ENCODE measurements at regions of chr19 and their contacts with region 1.

Region 1: GRCh38 chr19:41499899-41500298 is 56.9 kb downstream of the ERICH4 start:
- DNase-seq: no peak
- H3K4me3 ChIP-seq: no peak overlapping the region
- CTCF ChIP-seq: no peak

Region 2: DNA sequence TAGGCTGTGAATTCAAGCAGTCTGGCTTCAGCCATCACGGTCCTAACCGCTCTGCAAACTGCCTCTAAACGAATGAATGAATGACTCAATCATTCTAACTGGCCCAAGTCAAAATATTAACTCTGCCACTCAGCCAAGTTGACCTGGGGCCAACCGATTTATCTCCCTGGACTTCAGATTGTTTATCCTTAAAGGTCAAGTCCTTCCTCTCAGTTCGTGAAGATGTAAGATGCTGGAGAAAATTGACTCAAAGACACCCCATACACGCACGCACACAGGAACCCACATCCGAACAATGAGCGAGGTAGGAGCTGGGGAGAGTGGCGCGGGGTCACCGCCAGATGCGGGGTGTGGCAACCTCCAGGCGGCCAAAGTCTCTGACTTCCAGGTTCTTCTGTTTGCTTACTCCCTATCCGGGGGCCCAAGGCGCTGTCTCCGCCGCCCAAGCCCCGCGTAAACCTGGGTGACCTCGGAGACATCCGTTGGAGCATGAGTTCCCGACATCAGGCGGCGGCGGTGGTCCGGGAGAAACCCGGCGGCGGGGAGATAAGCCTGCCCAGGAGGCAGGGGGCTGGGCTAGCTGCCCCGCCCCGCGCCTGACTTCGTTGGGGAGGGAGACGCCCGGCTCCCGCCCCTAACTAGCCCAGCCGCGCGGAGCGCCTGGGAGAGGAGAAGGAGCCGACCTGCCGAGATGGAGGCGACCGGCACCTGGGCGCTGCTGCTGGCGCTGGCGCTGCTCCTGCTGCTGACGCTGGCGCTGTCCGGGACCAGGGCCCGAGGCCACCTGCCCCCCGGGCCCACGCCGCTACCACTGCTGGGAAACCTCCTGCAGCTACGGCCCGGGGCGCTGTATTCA is 307.1 kb before region 1 on chr19 and contains the start of gene CYP2S1:
- in situ Hi-C with region 1: no loop called
- DNase-seq: no peak
- H3K4me3 ChIP-seq: peak within 1 kb of the TSS; percentile 14
- CTCF ChIP-seq: no peak

Region 3: DNA sequence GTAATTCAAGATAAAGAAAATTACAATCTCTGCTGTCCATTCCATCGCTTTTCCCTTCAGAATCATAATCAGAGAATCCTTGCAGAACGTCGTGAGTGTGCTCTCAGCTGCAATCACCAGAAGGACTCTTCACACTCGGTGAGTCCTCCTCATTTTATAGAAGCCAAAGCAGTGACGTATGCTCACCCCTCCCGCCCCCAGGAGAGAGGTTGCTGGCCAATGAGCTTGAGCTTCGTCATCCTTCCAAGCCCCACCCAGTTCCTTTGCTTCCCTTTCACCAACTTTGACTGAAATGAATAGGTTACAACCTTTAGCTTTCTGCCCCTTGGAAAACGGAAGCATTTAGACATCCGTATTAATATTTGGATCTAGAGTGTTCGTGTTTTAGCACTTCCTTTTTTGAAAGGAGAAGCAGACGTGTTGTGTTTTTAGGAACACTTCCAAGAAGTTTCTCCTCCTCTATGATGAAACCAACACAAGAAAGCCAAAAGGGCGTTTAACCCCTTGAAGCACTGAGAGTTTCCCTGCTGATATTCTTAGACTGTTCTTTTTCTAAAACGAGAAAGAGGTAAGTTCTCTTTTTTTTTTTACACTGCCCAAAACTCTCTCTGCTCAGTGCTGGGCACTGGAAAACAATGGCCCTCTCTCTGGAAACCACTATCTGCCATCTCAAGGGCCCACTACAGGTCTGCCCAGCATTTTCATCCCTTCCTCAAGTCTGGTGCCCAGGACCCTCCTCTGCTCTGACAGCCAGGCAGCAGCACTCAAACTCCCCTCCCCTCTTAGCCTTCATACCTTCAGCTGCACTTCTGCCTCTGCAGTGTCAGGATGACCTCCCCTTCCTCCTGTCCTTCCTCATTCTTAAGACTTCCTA is 31.8 kb after region 1 on chr19:
- in situ Hi-C with region 1: loop called (anchors 5 kb)
- DNase-seq: no peak
- H3K4me3 ChIP-seq: no peak overlapping the region
- CTCF ChIP-seq: no peak

Region 4: DNA sequence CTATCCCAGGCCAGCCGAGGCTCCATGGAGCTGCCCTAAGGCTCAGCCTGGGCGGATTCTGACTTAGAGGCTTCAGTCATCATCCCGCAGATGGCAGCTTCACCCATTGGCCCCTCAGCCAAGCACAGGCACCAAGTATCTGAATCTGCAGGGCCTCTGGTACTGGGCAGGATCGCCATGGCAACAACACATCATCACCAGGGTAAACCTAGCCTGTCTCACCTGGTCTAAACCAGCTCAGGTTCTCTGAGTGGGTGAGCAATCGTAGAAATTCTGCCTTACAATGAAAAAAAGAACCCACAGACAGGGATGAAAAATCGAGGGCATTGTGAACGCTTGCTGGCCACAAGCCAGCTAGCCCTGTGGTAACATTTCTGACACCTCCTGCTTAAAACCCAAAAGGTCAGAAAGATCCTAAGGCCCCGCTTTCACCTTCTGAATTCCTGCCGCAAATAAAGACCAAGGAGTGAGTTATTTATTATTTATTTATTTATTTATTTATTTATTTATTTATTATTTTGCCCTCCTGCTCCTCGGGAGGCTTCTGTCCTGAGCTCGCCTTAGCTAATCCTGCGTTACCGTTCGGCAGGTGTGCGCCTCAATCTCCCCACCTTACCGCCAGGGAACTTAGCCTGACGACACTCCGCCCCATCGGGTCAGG is 64.1 kb after region 1 on chr19:
- in situ Hi-C with region 1: no loop called
- DNase-seq: no peak
- H3K4me3 ChIP-seq: no peak overlapping the region
- CTCF ChIP-seq: no peak

Region 5: DNA sequence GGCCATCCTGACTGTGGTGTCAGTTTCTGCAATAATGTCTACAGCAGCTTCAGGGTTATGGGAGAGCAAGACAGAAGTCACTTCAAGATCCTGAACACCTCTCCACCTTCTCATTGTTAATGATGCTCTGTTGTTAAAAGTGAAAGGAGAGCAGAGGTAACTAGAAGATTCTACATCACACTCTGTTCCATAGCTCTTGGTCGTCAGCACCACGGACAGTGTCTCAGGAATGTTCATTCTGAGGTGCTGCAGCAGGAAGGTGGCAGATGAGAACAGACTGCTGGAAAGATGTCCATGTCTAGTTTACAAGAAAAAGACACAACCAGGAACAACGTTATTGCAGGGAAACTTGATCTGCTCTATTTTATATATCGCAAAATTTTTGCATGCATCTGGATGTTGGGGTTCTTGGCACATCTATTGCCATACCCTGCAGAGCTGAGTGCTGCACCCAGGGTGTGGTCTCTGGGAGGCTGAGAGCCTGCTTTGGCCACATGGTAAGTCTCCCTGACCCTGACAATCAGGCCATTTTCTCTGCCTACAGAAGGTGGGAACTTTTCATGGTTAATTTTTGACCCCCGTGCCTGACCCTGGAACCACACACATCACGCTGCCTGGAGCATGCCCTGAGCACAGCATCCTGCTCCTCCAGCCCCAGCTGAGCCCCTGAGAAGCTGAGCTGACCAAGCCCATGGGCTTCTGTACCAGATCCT is 88.8 kb after region 1 on chr19:
- in situ Hi-C with region 1: no loop called
- DNase-seq: peak; percentile 9
- H3K4me3 ChIP-seq: no peak overlapping the region
- CTCF ChIP-seq: no peak

Region 6: DNA sequence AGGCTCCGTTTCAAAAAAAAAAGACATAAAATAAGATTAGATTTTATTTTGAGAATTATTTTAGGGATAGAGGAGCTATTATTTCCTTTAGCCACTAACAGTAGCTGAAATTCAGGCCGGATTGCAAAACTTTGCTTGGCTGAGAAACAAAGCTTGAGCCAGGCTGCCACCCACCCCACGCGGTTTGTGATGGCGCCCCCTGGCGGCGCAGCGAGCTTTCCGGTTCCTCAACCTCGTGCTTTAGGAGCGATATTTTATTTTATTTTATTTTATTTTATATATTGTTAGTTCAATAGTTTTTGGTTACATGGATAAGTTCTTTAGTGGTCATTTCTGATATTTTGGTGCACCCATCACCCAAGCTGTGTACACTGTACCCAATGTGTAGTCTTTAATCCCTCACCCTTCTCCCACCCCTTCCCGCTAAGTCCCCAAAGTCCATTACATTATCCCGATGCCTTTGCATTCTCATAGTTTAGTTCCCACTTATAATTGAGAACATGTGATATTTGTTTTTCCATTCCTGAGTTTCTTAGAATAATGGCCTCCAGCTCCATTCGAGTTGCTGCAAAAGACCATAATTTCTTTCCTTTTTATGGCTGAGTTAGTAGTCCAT is 146.8 kb after region 1 on chr19:
- in situ Hi-C with region 1: no loop called
- DNase-seq: no peak
- H3K4me3 ChIP-seq: no peak overlapping the region
- CTCF ChIP-seq: peak; percentile 25

Measured in astrocyte of the cerebellum (primary cell).